ENCODE measurements at regions of chr16 and their contacts with region 1.

Region 1: GRCh38 chr16:89289428-89290395 is 72.2 kb downstream of the ZNF778 start:
- DNase-seq: peak; percentile 75
- H3K4me3 ChIP-seq: no peak overlapping the region
- H3K27ac ChIP-seq: no peak overlapping the region
- H3K4me1 ChIP-seq: no peaks in the 10 kb centered on the region
- CTCF ChIP-seq: peak; percentile 91

Region 2: GRCh38 chr16:89246903-89247733 is 42.6 kb before region 1 on chr16:
- CTCF ChIA-PET with region 1: no interaction called
- POLR2A ChIA-PET with region 1: no interaction called
- intact Hi-C with region 1: loop called (anchors 2 kb)
- DNase-seq: peak; percentile 80
- H3K4me3 ChIP-seq: peak overlapping the region; percentile 55
- H3K27ac ChIP-seq: no peak overlapping the region
- H3K4me1 ChIP-seq: peaks cover 6% of the 10 kb centered on the region
- CTCF ChIP-seq: no peak

Measured in OCI-LY7 (cell line).